ENCODE measurements at regions of chr12 and their contacts with region 1.

Region 1: DNA sequence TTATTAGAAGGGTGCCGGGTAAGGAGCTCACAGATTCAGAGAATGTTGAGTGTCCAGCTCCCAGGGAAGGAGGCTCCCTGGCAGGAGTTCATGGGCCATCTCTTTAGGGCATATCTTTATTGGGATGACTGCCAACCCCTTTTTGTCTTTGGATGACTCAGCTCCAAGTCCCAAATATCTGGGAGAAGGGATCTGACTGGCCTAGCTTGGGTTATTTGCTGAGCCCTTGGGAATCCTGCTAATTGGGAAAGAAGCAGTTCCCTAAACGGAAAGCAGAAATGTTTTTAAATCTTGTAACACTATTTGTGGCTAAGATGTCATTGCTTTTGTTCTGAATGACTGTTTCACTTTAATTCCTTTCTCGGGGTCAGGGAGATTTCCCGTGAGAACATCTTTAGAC is 12.6 kb downstream of the DDX55 start:
- DNase-seq: no peak
- H3K4me3 ChIP-seq: no peak overlapping the region
- H3K27ac ChIP-seq: no peak overlapping the region
- H3K4me1 ChIP-seq: no peaks in the 10 kb centered on the region
- H3K27me3 ChIP-seq: no peaks in the 10 kb centered on the region
- CTCF ChIP-seq: no peak
- EP300 ChIP-seq: no peak
- POLR2A ChIP-seq: no peak
- RAD21 ChIP-seq: no peak

Region 2: DNA sequence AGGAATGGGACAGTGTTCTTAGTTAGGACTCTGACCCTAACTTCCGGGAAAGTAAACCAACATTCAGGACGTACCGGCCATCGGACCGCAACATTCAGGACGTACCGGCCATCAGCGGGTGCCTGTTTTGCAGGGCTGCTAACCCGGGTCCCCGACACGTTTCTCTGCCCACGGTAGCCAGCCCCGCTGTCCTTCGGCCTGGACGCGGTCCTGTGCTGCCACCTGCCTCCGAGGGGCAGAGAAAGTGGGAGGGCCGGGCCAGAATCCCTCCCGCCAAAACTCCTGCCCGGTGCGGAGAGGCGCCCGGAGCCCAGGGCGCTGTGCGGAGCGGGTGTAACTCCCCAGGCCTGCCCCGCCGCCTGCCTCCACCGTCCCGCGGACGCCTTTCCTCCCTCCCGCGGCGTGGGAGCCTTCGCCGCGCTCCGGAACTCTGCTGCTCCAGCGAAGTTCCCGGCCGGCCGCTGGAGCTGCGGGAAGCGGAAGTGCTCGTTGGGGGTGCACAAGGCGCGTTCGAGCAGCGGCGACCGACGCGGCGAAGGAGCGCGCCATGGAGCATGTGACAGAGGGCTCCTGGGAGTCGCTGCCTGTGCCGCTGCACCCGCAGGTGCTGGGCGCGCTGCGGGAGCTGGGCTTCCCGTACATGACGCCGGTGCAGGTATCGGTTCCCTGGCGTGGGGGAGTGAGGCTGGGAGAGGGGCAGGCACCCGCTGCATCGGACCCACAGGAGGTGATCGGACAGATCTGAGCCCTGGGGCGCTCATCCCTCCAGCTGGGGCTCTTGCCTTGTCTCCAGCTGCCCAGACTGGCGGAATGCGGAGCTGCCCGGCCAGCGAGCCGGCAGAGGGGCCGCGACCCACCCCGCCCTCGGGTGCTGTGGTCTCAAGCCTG is 12.7 kb before region 1 on chr12 and contains the start of gene DDX55:
- CTCF ChIA-PET with region 1: interaction called, 17 read pairs
- POLR2A ChIA-PET with region 1: interaction called, 25 read pairs
- DNase-seq: peak in 1 of 2 experiments; percentile 86
- H3K4me3 ChIP-seq: peak within 1 kb of the TSS; percentile 80 to 99 (median 98)
- H3K27ac ChIP-seq: peak within 1 kb of the TSS; percentile 92
- H3K4me1 ChIP-seq: peaks cover 0 to 1% (median 0%) of the 10 kb centered on the region in 4 experiments; a peak in 2 of 7 replicates
- H3K27me3 ChIP-seq: no peaks in the 10 kb centered on the region
- CTCF ChIP-seq: peak; percentile 6 to 13 (median 9); a peak in 2 of 4 replicates
- EP300 ChIP-seq: peak in 1 of 2 experiments; percentile 77; a peak in 1 of 3 replicates
- POLR2A ChIP-seq: peak; percentile 52 to 84; a peak in 2 of 3 replicates
- RAD21 ChIP-seq: peak; percentile 40 to 53
- total RNA-seq, gene DDX55: 35.1 and 37.7 TPM in 2 replicates